Psoas muscle (tissue), 8 donors: ENCODE measurements at regions of chr1 and their contacts with region 1.

Region 1: DNA sequence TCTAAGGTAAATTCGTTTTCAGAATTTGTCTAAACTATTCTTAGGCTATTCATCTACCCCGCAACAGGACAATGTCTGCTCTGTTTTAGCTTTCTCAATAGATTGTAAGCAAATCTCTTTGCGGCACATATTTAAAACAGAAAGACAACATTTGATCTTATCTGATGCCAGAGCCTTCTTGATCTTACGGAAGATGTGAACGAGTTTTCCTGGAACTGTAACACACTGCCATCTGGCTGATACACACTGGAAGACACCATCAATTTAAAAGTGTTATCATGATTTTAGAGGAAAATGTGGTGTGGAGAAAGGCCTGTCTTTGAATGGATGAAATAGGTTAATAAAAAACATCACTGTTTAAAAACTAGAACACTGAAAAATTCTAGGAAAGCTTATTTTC is 36.1 kb downstream of the COA6 start:
- DNase-seq: no peak
- ATAC-seq: no peak
- H3K4me3 ChIP-seq: no peak overlapping the region
- H3K27ac ChIP-seq: no peak overlapping the region
- H3K4me1 ChIP-seq: no peaks in the 10 kb centered on the region
- H3K27me3 ChIP-seq: no peaks in the 10 kb centered on the region
- CTCF ChIP-seq: no peak

Region 2: DNA sequence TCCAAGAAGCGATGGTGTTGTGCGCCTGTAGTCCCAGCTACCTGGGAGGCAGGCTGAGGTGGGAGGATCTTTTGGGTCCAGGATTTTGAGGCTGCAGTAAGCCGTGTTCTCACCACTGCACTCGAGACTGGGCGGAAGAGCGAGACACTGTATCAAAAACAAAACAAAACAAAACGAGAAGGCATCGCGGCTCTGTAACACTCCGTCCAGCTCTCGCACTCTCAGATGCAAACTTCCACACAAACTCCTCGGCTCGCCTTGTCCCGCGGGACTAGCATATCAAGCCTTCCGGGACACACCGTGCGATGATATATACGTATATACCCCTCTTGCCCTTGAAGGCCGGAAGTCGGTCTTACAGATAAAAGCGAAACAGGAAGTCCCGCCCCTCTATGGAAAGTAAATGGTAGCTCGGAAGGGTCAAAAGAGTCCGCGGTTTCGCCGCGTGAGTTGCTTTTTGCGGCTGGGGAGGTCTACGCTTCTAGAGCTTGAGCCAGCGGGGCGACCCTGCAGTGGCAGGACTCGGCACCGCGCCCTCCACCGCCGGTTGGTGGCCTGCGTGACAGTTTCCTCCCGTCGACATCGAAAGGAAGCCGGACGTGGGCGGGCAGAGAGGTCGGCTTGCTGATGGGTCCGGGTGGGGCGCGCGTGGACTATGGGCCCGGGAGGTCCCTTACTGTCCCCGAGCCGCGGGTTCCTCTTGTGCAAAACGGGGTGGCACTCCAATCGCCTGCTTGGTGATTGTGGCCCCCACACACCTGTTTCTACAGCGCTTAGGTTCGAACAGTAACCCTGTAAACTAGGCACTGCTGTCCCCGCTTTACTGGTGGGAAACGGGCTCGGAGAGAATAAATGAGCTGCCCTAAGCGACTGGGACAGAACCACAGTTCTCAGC is 36.0 kb before region 1 on chr1 and contains the start of gene COA6:
- intact Hi-C with region 1: loop called in 1 of 2 experiments (anchors 5 kb)
- DNase-seq: peak; percentile 93 to 95
- ATAC-seq: peak; percentile 96 to 97 (median 96)
- H3K4me3 ChIP-seq: peak within 1 kb of the TSS; percentile 91
- H3K27ac ChIP-seq: peak within 1 kb of the TSS; percentile 99
- H3K4me1 ChIP-seq: peaks cover 20% of the 10 kb centered on the region
- H3K27me3 ChIP-seq: no peaks in the 10 kb centered on the region
- CTCF ChIP-seq: peak; percentile 11
- total RNA-seq, gene COA6: 52.0 to 73.6 (median 60.1) TPM